Endothelial cell of umbilical vein (primary cell): ENCODE measurements at regions of chr4 and their contacts with region 1.

Region 1: GRCh38 chr4:150867148-150867547 is 147.9 kb downstream of the LRBA start:
- DNase-seq: peak; percentile 84
- H3K4me3 ChIP-seq: no peak overlapping the region
- H3K27ac ChIP-seq: no peak overlapping the region
- H3K4me1 ChIP-seq: no peaks in the 10 kb centered on the region
- H3K27me3 ChIP-seq: no peaks in the 10 kb centered on the region
- CTCF ChIP-seq: peak; percentile 20 to 30
- POLR2A ChIP-seq: no peak

Region 2: GRCh38 chr4:149999485-150000074 is 867.6 kb before region 1 on chr4:
- CTCF ChIA-PET with region 1: interaction called, 7 read pairs
- POLR2A ChIA-PET with region 1: no interaction called
- dilution Hi-C with region 1: no loop called
- intact Hi-C with region 1: loop called (anchors 2 kb)
- DNase-seq: peak; percentile 70
- H3K4me3 ChIP-seq: no peak overlapping the region
- H3K27ac ChIP-seq: no peak overlapping the region
- H3K4me1 ChIP-seq: no peaks in the 10 kb centered on the region
- H3K27me3 ChIP-seq: no peaks in the 10 kb centered on the region
- CTCF ChIP-seq: peak; percentile 59 to 61
- POLR2A ChIP-seq: no peak

Region 3: GRCh38 chr4:150119492-150119891 is 747.7 kb before region 1 on chr4:
- CTCF ChIA-PET with region 1: no interaction called
- POLR2A ChIA-PET with region 1: no interaction called
- dilution Hi-C with region 1: no loop called
- intact Hi-C with region 1: no loop called
- DNase-seq: peak; percentile 54
- H3K4me3 ChIP-seq: no peak overlapping the region
- H3K27ac ChIP-seq: peak overlapping the region; percentile 53
- H3K4me1 ChIP-seq: peaks cover 13% of the 10 kb centered on the region
- H3K27me3 ChIP-seq: no peaks in the 10 kb centered on the region
- CTCF ChIP-seq: no peak
- POLR2A ChIP-seq: no peak

Region 4: DNA sequence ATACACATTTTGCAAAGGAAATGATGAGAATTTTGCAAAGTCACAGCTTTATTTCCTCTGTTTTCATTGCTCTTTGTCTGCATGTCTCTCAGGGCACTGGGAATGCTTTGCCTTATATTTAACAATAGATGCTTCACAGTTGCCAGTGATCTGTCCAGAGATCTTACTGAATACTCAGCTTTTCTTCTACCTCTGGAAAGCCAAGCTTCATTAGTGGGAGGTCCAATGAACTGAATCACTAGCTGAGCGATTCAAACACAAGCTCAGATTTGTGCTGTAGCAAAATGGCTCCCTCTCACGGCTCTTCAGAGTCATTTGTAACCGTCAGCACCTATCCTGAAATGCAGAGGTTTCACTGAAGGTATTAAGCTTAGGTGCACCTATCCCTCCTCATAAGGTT is 650.0 kb before region 1 on chr4:
- CTCF ChIA-PET with region 1: interaction called, 10 read pairs
- POLR2A ChIA-PET with region 1: no interaction called
- dilution Hi-C with region 1: no loop called
- intact Hi-C with region 1: no loop called
- DNase-seq: peak; percentile 45
- H3K4me3 ChIP-seq: no peak overlapping the region
- H3K27ac ChIP-seq: no peak overlapping the region
- H3K4me1 ChIP-seq: no peaks in the 10 kb centered on the region
- H3K27me3 ChIP-seq: no peaks in the 10 kb centered on the region
- CTCF ChIP-seq: peak in 1 of 2 donors; percentile 5
- POLR2A ChIP-seq: no peak

Region 5: DNA sequence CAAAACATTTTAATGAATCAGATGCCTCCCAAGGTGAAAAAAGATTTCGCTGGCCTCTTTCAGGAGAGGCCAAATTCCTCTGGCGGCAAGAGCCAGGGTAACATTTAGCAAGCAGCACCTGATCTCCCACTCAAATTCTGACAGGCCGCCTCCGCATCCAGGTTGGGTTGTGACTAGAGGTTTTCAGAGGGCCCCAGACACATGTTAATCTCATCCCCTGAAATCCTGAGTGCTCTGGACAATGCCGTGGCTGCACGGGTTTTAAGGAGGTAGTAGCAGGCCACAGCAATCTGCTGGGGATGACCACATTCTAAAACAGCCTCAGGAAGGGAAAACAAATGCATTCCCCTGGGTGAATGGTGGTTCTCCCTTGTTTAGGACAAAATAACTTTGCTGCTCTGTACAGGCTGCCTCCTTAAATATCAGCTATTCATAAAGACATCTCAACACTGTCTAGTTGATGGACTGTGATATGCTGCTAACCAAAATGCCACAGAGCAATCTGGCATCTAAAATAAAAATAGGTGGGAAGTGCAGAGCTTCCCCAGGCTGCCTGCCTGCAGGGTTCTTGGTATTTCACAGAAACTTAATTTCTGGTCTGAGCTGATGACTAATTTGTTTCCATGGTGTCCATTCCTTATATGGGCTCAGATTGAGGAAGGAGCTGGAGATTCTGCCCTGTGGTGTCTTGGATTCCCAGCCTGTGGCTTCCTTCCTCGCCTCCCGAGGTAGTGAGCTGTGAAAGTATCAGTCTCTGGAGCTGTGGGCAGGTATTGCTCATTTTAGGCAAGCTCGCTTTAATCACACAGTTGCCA is 586.9 kb before region 1 on chr4:
- CTCF ChIA-PET with region 1: interaction called, 11 read pairs
- POLR2A ChIA-PET with region 1: no interaction called
- dilution Hi-C with region 1: no loop called
- intact Hi-C with region 1: no loop called
- DNase-seq: peak; percentile 40
- H3K4me3 ChIP-seq: no peak overlapping the region
- H3K27ac ChIP-seq: no peak overlapping the region
- H3K4me1 ChIP-seq: peaks cover 6% of the 10 kb centered on the region
- H3K27me3 ChIP-seq: no peaks in the 10 kb centered on the region
- CTCF ChIP-seq: no peak
- POLR2A ChIP-seq: no peak

Region 6: GRCh38 chr4:150415213-150415612 is 451.9 kb before region 1 on chr4:
- CTCF ChIA-PET with region 1: interaction called, 11 read pairs
- POLR2A ChIA-PET with region 1: no interaction called
- dilution Hi-C with region 1: no loop called
- intact Hi-C with region 1: no loop called
- DNase-seq: no peak
- H3K4me3 ChIP-seq: no peak overlapping the region
- H3K27ac ChIP-seq: no peak overlapping the region
- H3K4me1 ChIP-seq: peaks cover 9% of the 10 kb centered on the region
- H3K27me3 ChIP-seq: no peaks in the 10 kb centered on the region
- CTCF ChIP-seq: no peak
- POLR2A ChIP-seq: no peak

Region 7: DNA sequence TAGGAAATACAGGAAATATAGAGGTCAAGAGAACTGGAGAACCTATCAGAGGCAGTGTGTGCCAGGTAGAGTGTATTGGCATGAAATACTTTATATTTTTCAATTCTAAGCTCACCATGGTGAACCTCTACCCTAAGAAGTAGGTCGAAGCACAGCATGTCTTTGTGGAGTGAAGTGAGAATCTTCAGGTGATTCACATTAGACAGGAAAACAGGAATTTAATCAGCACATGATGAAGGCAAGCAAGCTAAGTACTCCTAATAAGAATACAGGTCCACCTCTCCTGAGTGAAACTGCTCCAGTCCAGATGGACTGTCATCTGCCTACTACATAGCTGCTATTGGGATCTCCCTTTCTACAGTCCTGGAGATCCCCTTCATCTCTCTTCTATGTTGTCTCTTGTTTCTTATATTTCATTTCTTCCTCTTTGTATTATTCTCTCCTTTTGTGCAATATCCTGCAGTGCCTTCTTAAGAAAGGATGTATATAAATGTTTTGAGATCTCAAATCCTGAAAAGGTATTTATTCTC is 11.1 kb before region 1 on chr4:
- CTCF ChIA-PET with region 1: interaction called, 44 read pairs
- POLR2A ChIA-PET with region 1: no interaction called
- dilution Hi-C with region 1: no loop called
- intact Hi-C with region 1: no loop called
- DNase-seq: peak; percentile 7
- H3K4me3 ChIP-seq: no peak overlapping the region
- H3K27ac ChIP-seq: no peak overlapping the region
- H3K4me1 ChIP-seq: no peaks in the 10 kb centered on the region
- H3K27me3 ChIP-seq: no peaks in the 10 kb centered on the region
- CTCF ChIP-seq: no peak
- POLR2A ChIP-seq: no peak